ENCODE measurements at regions of chr16 and their contacts with region 1.

Region 1: DNA sequence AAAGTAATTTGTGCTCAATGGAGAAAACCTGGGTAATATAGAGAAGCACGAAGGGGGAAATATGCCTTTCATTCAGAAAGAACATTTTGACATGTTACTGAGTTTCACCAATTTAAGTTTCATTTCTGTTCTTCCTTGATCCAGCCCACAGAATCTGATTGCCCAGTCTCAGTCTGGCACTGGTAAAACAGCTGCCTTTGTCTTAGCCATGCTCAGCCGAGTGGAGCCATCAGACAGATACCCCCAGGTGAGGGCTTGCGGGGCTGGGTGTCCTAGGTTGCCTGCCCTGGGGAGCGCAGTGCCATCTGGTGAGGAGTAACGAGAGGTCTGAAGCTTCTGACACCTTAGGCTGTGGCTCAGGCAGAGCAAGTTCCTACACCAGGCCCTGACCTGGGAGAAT is 17.7 kb downstream of the DDX19A start:
- DNase-seq: no peak
- ATAC-seq: peak; percentile 45
- H3K4me3 Mint-ChIP-seq: no peak overlapping the region
- H3K27ac Mint-ChIP-seq: peak overlapping the region; percentile 34
- H3K4me1 Mint-ChIP-seq: peaks cover 4% of the 10 kb centered on the region
- H3K27me3 Mint-ChIP-seq: no peaks in the 10 kb centered on the region

Region 2: GRCh38 chr16:70251629-70252354 is 112.6 kb before region 1 on chr16 and contains the start of gene EXOSC6:
- CTCF ChIA-PET with region 1: no interaction called
- DNase-seq: peak; percentile 95
- ATAC-seq: peak; percentile 89
- H3K4me3 Mint-ChIP-seq: peak within 1 kb of the TSS; percentile 84
- H3K27ac Mint-ChIP-seq: peak within 1 kb of the TSS; percentile 92
- H3K4me1 Mint-ChIP-seq: peaks cover 30% of the 10 kb centered on the region
- H3K27me3 Mint-ChIP-seq: no peaks in the 10 kb centered on the region
- total RNA-seq, gene EXOSC6: 32.2 to 33.5 TPM

Region 3: DNA sequence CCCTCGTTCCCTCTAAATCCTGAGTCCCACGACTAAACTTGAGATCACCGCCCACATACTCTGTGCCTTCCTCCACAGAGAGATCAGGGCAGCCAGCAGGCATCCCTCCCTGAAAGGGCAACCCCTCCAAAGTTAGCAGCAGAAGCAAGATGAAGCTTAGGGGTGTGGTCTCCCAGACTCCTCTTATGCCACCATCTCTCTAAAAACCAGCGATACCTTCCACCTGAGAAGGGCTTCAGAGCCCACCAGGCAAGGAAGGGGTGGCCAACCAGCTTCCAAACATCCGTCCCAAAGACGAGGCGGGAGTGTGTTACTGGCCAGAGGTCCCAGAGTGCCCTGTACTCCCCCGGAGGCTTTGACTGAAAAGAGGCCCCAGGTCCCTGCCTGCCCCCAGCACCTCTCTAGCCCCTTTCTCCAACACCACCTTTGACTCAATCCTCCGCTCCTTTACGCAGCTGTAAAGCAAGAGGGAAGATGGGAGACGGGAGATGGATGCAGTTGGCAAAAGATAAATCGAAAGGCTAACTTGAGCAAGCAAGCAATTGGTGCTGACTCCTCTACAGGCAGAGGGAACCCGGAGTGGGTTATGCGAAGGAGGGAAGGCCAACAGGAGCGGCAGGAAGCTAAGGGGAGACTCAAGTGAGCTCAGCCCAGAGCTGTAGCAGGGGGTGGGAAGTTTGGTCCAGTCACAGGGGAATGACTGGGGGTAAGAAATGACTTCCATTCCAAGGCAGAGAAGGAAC is 73.4 kb after region 1 on chr16:
- CTCF ChIA-PET with region 1: no interaction called
- DNase-seq: peak; percentile 46
- ATAC-seq: no peak
- H3K4me3 Mint-ChIP-seq: peak overlapping the region; percentile 85
- H3K27ac Mint-ChIP-seq: peak overlapping the region; percentile 74
- H3K4me1 Mint-ChIP-seq: peaks cover 37% of the 10 kb centered on the region
- H3K27me3 Mint-ChIP-seq: no peaks in the 10 kb centered on the region

Region 4: DNA sequence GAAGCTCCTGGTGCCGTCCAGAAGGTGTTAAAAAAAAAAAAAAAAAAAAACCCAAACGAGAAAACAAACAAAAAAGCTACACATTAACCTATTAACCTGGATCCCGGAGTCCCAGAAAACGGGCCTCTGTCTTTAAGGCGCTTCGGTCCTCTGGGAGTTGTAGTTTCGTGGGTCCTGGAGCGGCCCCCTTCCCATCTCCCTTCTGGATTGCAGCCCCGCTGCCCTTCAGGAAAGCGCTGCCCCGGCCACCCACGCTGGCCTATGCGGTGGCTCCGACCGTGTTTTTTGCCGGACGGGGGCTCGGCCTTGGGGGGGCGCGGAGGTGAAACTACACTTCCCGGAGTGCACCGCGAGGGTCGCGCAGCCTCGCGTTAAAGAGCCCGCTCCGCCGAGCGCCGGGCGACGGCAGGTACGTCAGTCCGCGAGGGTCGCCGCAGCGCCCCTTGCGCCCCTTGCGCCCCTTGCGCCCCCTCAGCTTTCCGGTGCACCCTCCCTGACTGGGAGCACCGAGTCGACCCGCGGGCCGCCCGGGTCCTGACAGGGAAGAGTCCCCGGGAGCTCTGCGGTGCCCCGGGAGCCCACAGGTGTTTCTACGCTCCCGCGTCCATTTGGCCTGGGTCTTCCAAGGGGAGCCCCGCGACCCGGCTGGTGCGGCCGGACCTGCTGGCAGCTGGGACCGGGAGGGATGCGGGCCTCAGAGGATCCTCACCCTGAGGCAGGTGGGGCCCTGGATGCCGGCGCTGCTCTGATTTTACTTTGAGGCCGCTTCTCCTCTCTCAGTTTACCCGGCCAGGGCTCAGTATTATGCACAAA is 90.0 kb after region 1 on chr16 and contains the start of gene FCSK:
- CTCF ChIA-PET with region 1: interaction called, 11 read pairs
- DNase-seq: peak; percentile 72
- ATAC-seq: peak; percentile 95
- H3K4me3 Mint-ChIP-seq: peak within 1 kb of the TSS; percentile 87
- H3K27ac Mint-ChIP-seq: peak within 1 kb of the TSS; percentile 87
- H3K4me1 Mint-ChIP-seq: peaks cover 21% of the 10 kb centered on the region
- H3K27me3 Mint-ChIP-seq: peaks cover 6% of the 10 kb centered on the region
- total RNA-seq, gene FCSK: 17.8 to 20.9 TPM

Measured in activated CD8-positive, alpha-beta memory T cell treated with anti-CD3 and anti-CD28 coated beads, Interleukin-2, amount 10 ng/mL, durations not matched to agents 7 days and 5 days (primary cell).